CD4-positive, alpha-beta T cell (primary cell): ENCODE measurements at regions of chr7 and their contacts with region 1.

Region 1: GRCh38 chr7:43625453-43625852 is 42.5 kb downstream of the STK17A start:
- DNase-seq: peak in 8 of 14 experiments; percentile 27 to 85 (median 52)
- ATAC-seq: peak; percentile 69
- H3K4me3 ChIP-seq: no peak overlapping the region
- H3K4me3 Mint-ChIP-seq: peak overlapping the region; percentile 59
- H3K27ac ChIP-seq: peak overlapping the region; percentile 35 to 45
- H3K27ac Mint-ChIP-seq: no peak overlapping the region
- H3K4me1 ChIP-seq: peaks cover 35% of the 10 kb centered on the region
- H3K4me1 Mint-ChIP-seq: peaks cover 97% of the 10 kb centered on the region
- H3K27me3 ChIP-seq: no peaks in the 10 kb centered on the region
- H3K27me3 Mint-ChIP-seq: no peaks in the 10 kb centered on the region
- CTCF ChIP-seq: no peak

Region 2: GRCh38 chr7:43590862-43591550 is 34.4 kb before region 1 on chr7:
- CTCF ChIA-PET with region 1: interaction called, 6 read pairs
- POLR2A ChIA-PET with region 1: interaction called, 20 read pairs
- intact Hi-C with region 1: loop called (anchors 5 kb)
- DNase-seq: no peak
- ATAC-seq: no peak
- H3K4me3 ChIP-seq: peak overlapping the region; percentile 13
- H3K4me3 Mint-ChIP-seq: peak overlapping the region; percentile 77
- H3K27ac ChIP-seq: peak overlapping the region in 1 of 2 donors; percentile 87
- H3K27ac Mint-ChIP-seq: peak overlapping the region; percentile 98
- H3K4me1 ChIP-seq: peaks cover 53% of the 10 kb centered on the region
- H3K4me1 Mint-ChIP-seq: peaks cover 87% of the 10 kb centered on the region
- H3K27me3 ChIP-seq: no peaks in the 10 kb centered on the region
- H3K27me3 Mint-ChIP-seq: no peaks in the 10 kb centered on the region
- CTCF ChIP-seq: no peak

Region 3: DNA sequence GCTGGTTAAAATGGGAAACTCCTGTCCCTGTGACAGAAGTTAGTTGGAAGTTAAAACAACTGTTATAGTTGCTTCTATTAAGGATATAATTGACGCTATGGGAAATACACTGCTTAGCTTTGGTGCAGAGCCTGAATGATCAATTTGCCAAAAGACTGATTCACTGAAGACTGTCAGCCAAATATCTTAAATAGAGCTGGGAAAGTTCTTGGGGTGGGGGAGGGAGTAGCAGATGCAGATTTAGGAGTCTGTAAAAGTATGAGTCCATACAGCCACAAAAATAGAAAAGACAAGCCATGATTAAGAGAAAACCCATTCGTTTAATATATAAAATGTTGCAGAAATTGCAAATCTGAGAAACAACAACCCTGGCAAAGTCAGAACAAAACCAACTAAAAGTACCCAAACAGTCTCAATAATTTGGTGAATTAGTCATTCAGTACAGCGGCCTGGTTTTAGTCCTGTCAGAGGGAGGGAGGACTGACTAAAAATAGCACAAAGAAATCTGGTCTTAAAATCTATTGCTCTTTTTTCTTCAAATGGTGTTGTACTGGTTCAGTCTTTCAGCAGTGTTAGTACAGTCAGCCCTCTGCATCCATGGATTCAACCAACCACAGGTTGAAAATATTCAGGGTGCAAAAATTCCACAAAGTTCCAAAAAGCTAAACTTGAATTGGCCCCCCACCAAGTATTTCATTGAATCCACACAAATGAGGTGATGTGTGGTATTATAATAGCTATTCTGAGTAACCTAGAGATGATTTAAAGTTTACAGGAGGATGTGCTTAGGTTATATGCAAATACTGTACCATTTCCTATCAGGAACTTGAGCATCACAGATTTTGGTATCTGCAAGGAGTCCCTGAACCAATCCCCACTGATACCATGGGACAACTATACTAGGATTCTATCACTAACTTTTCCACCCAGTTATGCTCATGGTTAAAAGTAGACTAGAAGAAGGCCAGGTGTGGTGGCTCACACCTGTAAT is 12.6 kb before region 1 on chr7:
- CTCF ChIA-PET with region 1: interaction called, 3 read pairs
- POLR2A ChIA-PET with region 1: interaction called, 5 read pairs
- intact Hi-C with region 1: loop called in 1 of 2 experiments (anchors 1 kb)
- DNase-seq: no peak
- ATAC-seq: peak; percentile 25
- H3K4me3 ChIP-seq: no peak overlapping the region
- H3K4me3 Mint-ChIP-seq: peak overlapping the region; percentile 23
- H3K27ac ChIP-seq: peak overlapping the region; percentile 40 to 44
- H3K27ac Mint-ChIP-seq: peak overlapping the region; percentile 72
- H3K4me1 ChIP-seq: peaks cover 62% of the 10 kb centered on the region
- H3K4me1 Mint-ChIP-seq: peaks cover 55% of the 10 kb centered on the region
- H3K27me3 ChIP-seq: no peaks in the 10 kb centered on the region
- H3K27me3 Mint-ChIP-seq: no peaks in the 10 kb centered on the region
- CTCF ChIP-seq: no peak

Region 4: GRCh38 chr7:43669286-43670081 is 44.0 kb after region 1 on chr7:
- CTCF ChIA-PET with region 1: interaction called, 3 read pairs
- POLR2A ChIA-PET with region 1: interaction called, 4 read pairs
- intact Hi-C with region 1: loop called in 1 of 2 experiments (anchors 5 kb)
- DNase-seq: peak; percentile 42 to 92 (median 56)
- ATAC-seq: peak; percentile 82
- H3K4me3 ChIP-seq: peak overlapping the region; percentile 37
- H3K4me3 Mint-ChIP-seq: peak overlapping the region; percentile 82
- H3K27ac ChIP-seq: peak overlapping the region in 1 of 2 donors; percentile 75
- H3K27ac Mint-ChIP-seq: peak overlapping the region; percentile 86
- H3K4me1 ChIP-seq: peaks cover 22% of the 10 kb centered on the region
- H3K4me1 Mint-ChIP-seq: peaks cover 88% of the 10 kb centered on the region
- H3K27me3 ChIP-seq: no peaks in the 10 kb centered on the region
- H3K27me3 Mint-ChIP-seq: no peaks in the 10 kb centered on the region
- CTCF ChIP-seq: no peak

Region 5: DNA sequence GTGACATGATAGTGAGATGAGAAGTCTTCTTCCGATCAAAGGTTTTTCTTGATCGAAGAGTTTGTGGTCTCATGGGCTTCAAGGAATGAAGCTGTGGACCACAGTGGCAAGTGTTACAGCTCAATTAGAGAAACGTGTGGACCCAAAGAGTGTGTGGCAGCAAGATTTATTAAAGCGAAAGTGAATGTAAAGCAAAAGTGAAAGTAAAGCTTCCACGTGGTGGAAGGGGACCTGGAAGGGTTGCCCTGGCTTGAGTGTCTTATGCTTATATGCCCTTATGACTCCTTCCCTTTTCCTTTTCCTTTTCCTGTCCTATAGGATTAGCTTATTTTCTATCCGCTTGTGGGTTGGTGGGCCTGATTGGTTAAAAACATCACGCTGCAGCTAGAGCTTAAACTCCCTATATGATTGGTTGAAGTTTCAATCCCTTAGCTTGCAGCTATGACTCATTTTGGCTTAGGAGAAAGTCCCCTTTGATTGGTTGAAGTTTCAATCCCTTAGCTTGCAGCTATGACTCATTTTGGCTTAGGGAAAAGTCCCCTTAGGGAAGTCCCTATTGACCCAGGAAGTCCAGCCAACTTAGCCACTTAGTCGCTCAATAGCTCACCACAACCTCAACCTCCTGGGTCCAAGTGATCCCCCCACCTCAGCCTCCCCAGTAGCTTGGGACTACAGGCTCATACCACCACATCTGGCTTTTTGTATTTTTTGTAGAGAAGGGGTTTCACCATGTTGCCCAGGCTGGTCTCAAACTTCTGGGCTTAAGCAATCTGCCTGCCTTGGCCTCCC is 209.2 kb after region 1 on chr7:
- CTCF ChIA-PET with region 1: no interaction called
- POLR2A ChIA-PET with region 1: no interaction called
- intact Hi-C with region 1: no loop called
- DNase-seq: peak in 10 of 14 experiments; percentile 4 to 82 (median 12)
- ATAC-seq: peak; percentile 56
- H3K4me3 ChIP-seq: peak overlapping the region; percentile 68
- H3K4me3 Mint-ChIP-seq: peak overlapping the region; percentile 94
- H3K27ac ChIP-seq: peak overlapping the region in 1 of 2 donors; percentile 76
- H3K27ac Mint-ChIP-seq: peak overlapping the region; percentile 93
- H3K4me1 ChIP-seq: peaks cover 29% of the 10 kb centered on the region
- H3K4me1 Mint-ChIP-seq: peaks cover 26% of the 10 kb centered on the region
- H3K27me3 ChIP-seq: no peaks in the 10 kb centered on the region
- H3K27me3 Mint-ChIP-seq: peaks cover 3% of the 10 kb centered on the region
- CTCF ChIP-seq: no peak